Activated naive CD4-positive, alpha-beta T cell treated with anti-CD3 and anti-CD28 coated beads for 36 hours (primary cell): ENCODE measurements at regions of chr5 and their contacts with region 1.

Region 1: GRCh38 chr5:55982957-55983381 is 11.8 kb downstream of the IL6ST start:
- DNase-seq: peak; percentile 53
- H3K4me3 Mint-ChIP-seq: peak overlapping the region; percentile 61
- H3K27ac Mint-ChIP-seq: peak overlapping the region; percentile 87
- H3K4me1 Mint-ChIP-seq: peaks cover 82% of the 10 kb centered on the region
- H3K27me3 Mint-ChIP-seq: no peaks in the 10 kb centered on the region

Region 2: GRCh38 chr5:55936100-55936693 is 46.8 kb before region 1 on chr5:
- CTCF ChIA-PET with region 1: interaction called, 11 read pairs
- intact Hi-C with region 1: loop called (anchors 1 kb)
- DNase-seq: peak; percentile 93
- H3K4me3 Mint-ChIP-seq: no peak overlapping the region
- H3K27ac Mint-ChIP-seq: no peak overlapping the region
- H3K4me1 Mint-ChIP-seq: peaks cover 15% of the 10 kb centered on the region
- H3K27me3 Mint-ChIP-seq: no peaks in the 10 kb centered on the region

Region 3: DNA sequence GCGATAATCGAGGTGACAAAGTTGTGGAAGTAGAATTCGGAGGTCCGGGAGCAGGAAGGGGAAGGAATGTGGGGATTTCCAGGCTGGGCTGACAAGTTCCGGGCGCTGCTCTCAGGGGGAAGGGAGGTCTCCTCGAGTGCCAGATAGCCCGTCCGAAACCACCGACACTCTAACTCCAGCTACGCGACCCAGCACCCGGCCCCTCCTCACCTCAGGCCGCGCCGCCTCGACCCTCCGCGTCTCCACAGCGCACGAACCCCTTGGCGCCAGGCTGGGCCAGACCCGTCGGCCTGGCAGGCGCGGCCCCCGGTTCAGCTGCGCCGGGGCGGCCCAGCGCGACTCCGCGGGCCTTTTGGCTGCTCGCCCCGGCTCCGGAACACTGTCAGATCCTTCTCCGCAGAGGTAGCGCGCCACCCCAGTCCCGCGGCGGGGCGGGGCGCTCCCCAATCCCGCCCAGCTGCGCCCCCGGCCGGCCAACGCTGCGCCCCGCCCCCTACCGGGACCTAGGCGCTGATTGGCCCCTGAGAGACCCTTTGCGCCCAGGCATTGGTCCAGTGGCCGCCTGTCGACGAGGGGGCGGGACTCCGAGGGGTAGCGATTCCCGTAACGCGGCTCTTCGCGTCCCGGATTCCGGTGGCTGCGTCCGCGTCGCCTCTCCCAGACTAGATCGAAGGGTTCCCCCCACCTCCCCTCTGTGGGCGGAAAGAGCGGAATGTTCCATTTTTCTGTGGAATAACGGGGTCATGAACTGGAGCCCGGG is 11.8 kb after region 1 on chr5 and contains the start of gene IL6ST:
- CTCF ChIA-PET with region 1: interaction called, 4 read pairs
- intact Hi-C with region 1: loop called (anchors 1 kb)
- DNase-seq: peak; percentile 97
- H3K4me3 Mint-ChIP-seq: peak within 1 kb of the TSS; percentile 100
- H3K27ac Mint-ChIP-seq: peak within 1 kb of the TSS; percentile 100
- H3K4me1 Mint-ChIP-seq: peaks cover 53% of the 10 kb centered on the region
- H3K27me3 Mint-ChIP-seq: no peaks in the 10 kb centered on the region
- total RNA-seq, gene IL6ST: 93.4 to 103 TPM

Region 4: GRCh38 chr5:56056875-56057274 is 73.9 kb after region 1 on chr5:
- CTCF ChIA-PET with region 1: interaction called, 6 read pairs
- intact Hi-C with region 1: loop called (anchors 1 kb)
- DNase-seq: no peak
- H3K4me3 Mint-ChIP-seq: peak overlapping the region; percentile 56
- H3K27ac Mint-ChIP-seq: peak overlapping the region; percentile 81
- H3K4me1 Mint-ChIP-seq: peaks cover 73% of the 10 kb centered on the region
- H3K27me3 Mint-ChIP-seq: no peaks in the 10 kb centered on the region

Region 5: DNA sequence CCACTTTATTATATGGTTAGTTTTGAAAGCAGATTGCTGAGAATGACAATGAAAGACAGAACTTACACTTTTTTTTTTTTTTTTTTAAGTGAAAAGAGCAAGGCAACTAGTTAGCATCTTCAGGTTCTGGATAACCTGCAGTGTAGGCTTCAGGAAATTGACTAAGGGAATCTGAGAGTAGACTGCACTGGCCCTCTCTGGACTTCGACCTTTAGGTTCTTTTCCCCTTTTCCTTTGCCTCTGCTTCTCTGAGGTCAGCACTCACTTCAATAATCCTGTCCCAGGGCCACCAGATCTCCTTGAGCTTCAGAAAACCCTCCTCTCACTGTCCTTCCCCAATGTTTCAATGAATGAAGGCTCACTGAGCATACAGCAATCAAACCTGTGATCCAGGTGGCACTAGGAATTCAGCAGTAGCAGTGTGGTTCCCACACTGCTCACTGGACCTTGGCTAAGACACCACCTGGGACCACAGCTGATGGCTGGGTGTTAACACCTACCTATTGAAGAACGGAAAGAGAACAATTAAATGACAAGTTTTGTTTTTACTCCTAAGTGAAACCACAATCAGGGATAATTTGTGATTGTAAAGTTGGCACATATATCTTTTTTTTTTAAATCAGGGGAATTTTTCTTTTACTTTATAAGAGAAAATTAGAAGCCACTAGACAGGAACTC is 97.5 kb after region 1 on chr5:
- CTCF ChIA-PET with region 1: no interaction called
- intact Hi-C with region 1: loop called (anchors 1 kb)
- DNase-seq: peak; percentile 72
- H3K4me3 Mint-ChIP-seq: peak overlapping the region; percentile 5
- H3K27ac Mint-ChIP-seq: peak overlapping the region; percentile 90
- H3K4me1 Mint-ChIP-seq: peaks cover 72% of the 10 kb centered on the region
- H3K27me3 Mint-ChIP-seq: no peaks in the 10 kb centered on the region

Region 6: DNA sequence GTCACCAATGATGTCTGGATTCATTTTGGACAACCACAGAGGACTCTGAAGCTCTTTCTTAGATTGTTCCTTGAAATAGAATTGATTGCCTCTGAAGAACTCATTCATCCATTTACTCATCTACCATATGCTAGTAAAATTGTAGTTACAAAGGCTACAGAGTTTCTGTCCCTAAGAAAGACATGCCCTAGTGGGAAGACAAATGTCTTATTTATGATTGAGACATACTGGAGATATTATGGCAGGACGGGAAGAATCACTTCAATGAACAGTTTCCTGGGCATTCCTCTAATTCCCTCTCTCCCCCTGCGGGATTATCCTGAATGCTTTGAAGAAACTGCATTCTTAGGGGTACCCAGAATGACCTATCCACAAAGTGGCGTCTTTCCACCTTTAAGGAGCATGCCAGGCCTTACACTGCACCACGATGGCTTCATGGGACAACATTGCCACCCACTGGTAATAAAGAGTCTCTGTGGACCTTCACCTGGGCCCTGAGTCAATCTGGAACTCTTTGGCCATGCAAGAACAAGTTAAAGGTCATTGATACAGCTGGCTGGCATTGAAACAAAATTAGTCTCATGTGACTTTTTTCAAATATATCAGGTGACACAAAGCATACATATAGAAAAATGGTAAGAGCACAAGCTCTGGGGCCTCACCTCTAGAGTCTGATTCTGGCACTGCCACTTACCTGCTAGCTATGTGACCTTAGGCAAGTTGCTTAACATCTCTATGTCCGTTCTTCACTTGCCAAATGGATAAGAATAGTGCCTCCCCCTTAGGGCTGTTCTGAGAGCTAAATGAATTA is 218.1 kb after region 1 on chr5:
- CTCF ChIA-PET with region 1: interaction called, 37 read pairs
- intact Hi-C with region 1: loop called (anchors 1 kb)
- DNase-seq: peak; percentile 83
- H3K4me3 Mint-ChIP-seq: no peak overlapping the region
- H3K27ac Mint-ChIP-seq: no peak overlapping the region
- H3K4me1 Mint-ChIP-seq: peaks cover 28% of the 10 kb centered on the region
- H3K27me3 Mint-ChIP-seq: no peaks in the 10 kb centered on the region

Region 7: GRCh38 chr5:56233230-56233629 is 250.3 kb after region 1 on chr5 and contains the start of gene ANKRD55:
- CTCF ChIA-PET with region 1: no interaction called
- intact Hi-C with region 1: no loop called
- DNase-seq: no peak
- H3K4me3 Mint-ChIP-seq: no peak within 1 kb of the TSS
- H3K27ac Mint-ChIP-seq: no peak within 1 kb of the TSS
- H3K4me1 Mint-ChIP-seq: no peaks in the 10 kb centered on the region
- H3K27me3 Mint-ChIP-seq: no peaks in the 10 kb centered on the region
- total RNA-seq, gene ANKRD55: 14.1 to 14.6 TPM

Region 8: GRCh38 chr5:56833325-56833724 is 850.4 kb after region 1 on chr5:
- CTCF ChIA-PET with region 1: no interaction called
- intact Hi-C with region 1: loop called (anchors 5 kb)
- DNase-seq: peak; percentile 61
- H3K4me3 Mint-ChIP-seq: no peak overlapping the region
- H3K27ac Mint-ChIP-seq: peak overlapping the region; percentile 37
- H3K4me1 Mint-ChIP-seq: peaks cover 91% of the 10 kb centered on the region
- H3K27me3 Mint-ChIP-seq: no peaks in the 10 kb centered on the region